ENCODE measurements at regions of chr11 and their contacts with region 1.

Region 1: DNA sequence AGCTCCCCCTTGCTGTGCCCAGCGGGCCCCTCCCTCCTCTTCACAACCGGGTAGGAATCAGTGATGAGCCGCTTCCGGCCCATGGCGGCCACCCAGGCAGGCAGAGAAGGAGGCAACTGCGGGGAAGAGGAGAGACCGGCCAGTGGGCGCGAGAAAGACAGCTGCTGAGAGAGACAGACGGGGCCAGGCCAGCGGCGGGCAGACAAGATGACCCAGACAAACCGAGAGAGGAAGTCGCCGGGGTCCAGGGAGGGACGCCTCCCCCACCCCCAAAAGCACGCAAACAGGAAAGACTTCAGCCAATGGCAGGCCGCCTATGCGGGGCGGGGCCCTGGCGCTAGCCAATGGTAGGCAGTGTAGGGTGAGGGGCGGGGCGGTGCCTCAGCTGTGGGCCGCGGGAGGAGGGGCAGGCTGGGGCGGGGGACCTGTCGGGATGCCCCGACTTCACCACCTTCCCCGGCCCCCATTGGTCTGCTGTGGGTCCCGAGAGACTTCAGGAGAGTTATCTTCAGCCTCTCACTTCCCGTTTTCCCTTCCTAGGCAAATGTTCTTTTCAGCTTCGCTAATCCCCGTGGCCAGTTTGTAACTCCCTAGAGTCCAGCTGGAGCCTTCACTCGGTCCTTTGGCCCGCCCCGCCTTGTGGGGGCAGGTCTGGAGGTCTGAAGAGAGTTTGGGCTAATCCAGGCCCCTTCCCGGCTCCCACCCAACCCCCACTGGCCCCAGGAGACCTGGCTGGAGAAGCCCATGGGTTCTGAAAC is at the start of gene POLD4:
- DNase-seq: peak; percentile 98
- ATAC-seq: peak; percentile 81
- H3K4me3 ChIP-seq: peak within 1 kb of the TSS; percentile 60 to 99 (median 83)
- H3K4me3 Mint-ChIP-seq: peak within 1 kb of the TSS; percentile 96
- H3K27ac ChIP-seq: peak within 1 kb of the TSS; percentile 94 to 96
- H3K27ac Mint-ChIP-seq: peak within 1 kb of the TSS; percentile 100
- H3K4me1 ChIP-seq: peaks cover 80 to 90% of the 10 kb centered on the region in 2 donors
- H3K4me1 Mint-ChIP-seq: peaks cover 87% of the 10 kb centered on the region
- H3K27me3 ChIP-seq: no peaks in the 10 kb centered on the region
- H3K27me3 Mint-ChIP-seq: no peaks in the 10 kb centered on the region
- CTCF ChIP-seq: no peak
- total RNA-seq, gene POLD4: 190 and 210 TPM in 2 replicates

Region 2: DNA sequence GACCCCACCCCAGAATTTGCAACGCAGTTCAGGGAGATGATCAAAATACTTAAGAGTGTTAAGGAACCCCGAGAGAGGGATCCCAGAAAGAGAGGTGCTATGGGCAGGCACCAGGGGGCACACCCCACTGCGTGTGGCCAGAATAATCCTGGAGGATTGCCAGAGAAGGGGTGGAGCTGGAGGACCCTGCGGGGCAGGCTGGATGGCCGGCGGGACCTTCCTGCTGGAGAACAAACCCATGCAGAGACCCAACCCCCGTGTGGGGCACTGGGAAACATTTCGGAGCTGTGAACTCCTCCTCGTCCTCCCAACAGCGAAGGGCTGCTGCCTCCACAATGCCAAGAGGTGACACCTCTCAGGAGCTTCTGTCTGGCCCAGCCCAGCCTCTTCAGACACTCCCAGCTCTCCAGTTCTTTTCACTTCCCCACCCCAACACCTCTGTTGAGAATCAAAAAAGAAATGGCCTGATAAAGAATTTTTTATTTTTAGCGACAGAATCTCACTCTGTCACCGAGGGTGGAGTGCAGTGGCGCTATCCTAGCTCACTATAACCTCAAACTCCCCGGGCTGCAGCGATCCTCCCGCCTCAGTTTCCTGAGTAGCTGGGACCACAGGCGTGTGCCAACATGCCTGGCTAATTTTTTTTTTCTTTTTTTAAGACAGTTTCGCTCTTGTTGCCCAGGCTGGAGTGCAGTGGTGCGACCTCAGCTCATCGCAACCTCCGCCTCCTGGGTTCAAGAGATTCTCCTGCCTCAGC is 271.3 kb before region 1 on chr11:
- CTCF ChIA-PET with region 1: interaction called, 10 read pairs
- POLR2A ChIA-PET with region 1: no interaction called
- intact Hi-C with region 1: no loop called
- DNase-seq: peak; percentile 43
- ATAC-seq: no peak
- H3K4me3 ChIP-seq: peak overlapping the region in 1 of 5 experiments; percentile 33
- H3K4me3 Mint-ChIP-seq: peak overlapping the region; percentile 54
- H3K27ac ChIP-seq: no peak overlapping the region
- H3K27ac Mint-ChIP-seq: no peak overlapping the region
- H3K4me1 ChIP-seq: peaks cover 11 to 12% of the 10 kb centered on the region in 2 donors
- H3K4me1 Mint-ChIP-seq: peaks cover 13% of the 10 kb centered on the region
- H3K27me3 ChIP-seq: peaks cover 0 to 8% (median 2%) of the 10 kb centered on the region in 4 experiments
- H3K27me3 Mint-ChIP-seq: peaks cover 9% of the 10 kb centered on the region
- CTCF ChIP-seq: no peak

Region 3: DNA sequence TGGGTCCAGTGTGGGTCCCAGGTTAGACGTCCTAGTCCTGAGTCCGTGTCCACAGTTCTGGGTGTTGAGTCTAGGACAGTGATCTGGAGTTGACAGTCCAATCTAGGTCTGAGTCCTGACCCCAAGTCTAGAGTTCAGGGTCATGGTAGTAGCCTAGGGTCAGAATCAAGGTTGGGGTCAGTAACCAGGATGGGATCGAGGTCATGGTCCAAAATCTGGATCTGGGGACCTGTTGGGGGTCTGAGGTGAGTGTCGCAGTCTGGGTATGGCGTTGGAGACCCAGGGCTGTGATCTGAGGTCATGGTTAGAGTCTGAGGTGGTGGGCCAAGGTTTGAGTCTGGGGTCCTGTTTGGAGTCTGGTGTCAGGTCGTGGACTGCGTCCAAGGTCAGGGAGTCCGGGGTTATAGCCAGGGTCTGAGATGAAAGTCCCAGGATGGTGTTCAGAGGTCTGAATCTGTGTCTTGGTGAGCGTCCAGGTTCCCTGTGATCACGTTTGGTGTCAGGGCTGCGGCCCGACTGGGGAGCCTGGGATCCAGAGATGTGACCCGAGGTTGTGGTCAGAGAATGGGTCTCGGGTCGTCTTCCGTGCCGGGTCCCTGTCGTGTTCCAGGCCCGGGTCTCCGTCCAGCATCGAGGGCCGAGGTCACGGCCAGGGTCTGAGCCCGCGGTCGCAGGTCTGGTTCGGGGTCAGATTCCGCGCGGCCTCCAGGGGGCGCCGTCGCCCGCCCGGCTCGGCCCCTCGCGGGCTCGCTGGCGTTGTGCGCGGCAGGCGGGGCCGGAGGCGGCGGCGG is 87.7 kb before region 1 on chr11:
- CTCF ChIA-PET with region 1: interaction called, 29 read pairs
- POLR2A ChIA-PET with region 1: interaction called, 26 read pairs
- intact Hi-C with region 1: no loop called
- DNase-seq: peak; percentile 89
- ATAC-seq: peak; percentile 69
- H3K4me3 ChIP-seq: no peak overlapping the region
- H3K4me3 Mint-ChIP-seq: peak overlapping the region; percentile 81
- H3K27ac ChIP-seq: peak overlapping the region; percentile 55 to 63
- H3K27ac Mint-ChIP-seq: peak overlapping the region; percentile 89
- H3K4me1 ChIP-seq: peaks cover 63 to 65% of the 10 kb centered on the region in 2 donors
- H3K4me1 Mint-ChIP-seq: peaks cover 66% of the 10 kb centered on the region
- H3K27me3 ChIP-seq: peaks cover 0 to 9% (median 2%) of the 10 kb centered on the region in 4 experiments
- H3K27me3 Mint-ChIP-seq: peaks cover 6% of the 10 kb centered on the region
- CTCF ChIP-seq: peak; percentile 69

Region 4: GRCh38 chr11:67277231-67277961 is 76.1 kb before region 1 on chr11:
- CTCF ChIA-PET with region 1: interaction called, 4 read pairs
- POLR2A ChIA-PET with region 1: interaction called, 12 read pairs
- intact Hi-C with region 1: no loop called
- DNase-seq: peak; percentile 96
- ATAC-seq: peak; percentile 95
- H3K4me3 ChIP-seq: peak overlapping the region; percentile 35 to 59 (median 50)
- H3K4me3 Mint-ChIP-seq: peak overlapping the region; percentile 84
- H3K27ac ChIP-seq: peak overlapping the region; percentile 82
- H3K27ac Mint-ChIP-seq: peak overlapping the region; percentile 95
- H3K4me1 ChIP-seq: peaks cover 82 to 86% of the 10 kb centered on the region in 2 donors
- H3K4me1 Mint-ChIP-seq: peaks cover 76% of the 10 kb centered on the region
- H3K27me3 ChIP-seq: no peaks in the 10 kb centered on the region
- H3K27me3 Mint-ChIP-seq: no peaks in the 10 kb centered on the region
- CTCF ChIP-seq: no peak

Region 5: DNA sequence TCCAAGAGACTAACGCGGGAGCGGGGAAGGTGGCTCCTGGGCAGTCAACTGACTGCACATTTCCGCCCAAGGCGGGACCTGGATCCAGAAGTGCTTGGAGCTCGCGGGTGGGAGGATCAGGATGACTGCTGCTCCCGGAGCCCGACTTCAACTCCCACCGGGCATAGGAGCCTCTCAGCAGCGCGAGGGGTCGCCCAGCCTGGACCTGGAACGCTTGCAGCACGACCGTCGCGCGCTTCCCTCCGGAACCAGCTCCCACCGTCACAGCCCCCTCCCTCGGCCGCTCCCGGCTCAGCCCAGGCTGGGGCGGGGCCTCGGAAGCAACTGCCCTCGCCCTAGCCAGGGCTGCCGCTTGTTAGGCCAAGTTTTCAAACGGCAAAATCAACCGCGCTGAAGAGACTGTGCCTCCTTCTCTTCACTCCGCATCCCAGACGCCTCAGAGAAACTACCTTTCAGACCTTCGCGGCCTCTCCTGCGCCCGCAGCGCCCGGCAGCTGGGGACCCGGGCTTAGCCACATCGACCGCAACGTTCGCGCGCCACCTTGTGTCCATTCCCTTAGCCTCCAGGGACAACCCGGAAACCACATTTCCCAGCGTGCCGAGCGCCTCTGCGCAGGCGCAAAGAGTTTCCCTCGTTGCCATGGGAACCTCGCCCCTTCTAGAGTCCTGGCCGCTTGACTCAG is 36.1 kb before region 1 on chr11:
- CTCF ChIA-PET with region 1: interaction called, 68 read pairs
- POLR2A ChIA-PET with region 1: interaction called, 13 read pairs
- intact Hi-C with region 1: loop called (anchors 1 kb)
- DNase-seq: peak; percentile 99
- ATAC-seq: peak; percentile 83
- H3K4me3 ChIP-seq: peak overlapping the region; percentile 77 to 92 (median 87)
- H3K4me3 Mint-ChIP-seq: peak overlapping the region; percentile 89
- H3K27ac ChIP-seq: peak overlapping the region; percentile 46 to 78
- H3K27ac Mint-ChIP-seq: peak overlapping the region; percentile 97
- H3K4me1 ChIP-seq: peaks cover 22 to 33% of the 10 kb centered on the region in 2 donors
- H3K4me1 Mint-ChIP-seq: peaks cover 21% of the 10 kb centered on the region
- H3K27me3 ChIP-seq: no peaks in the 10 kb centered on the region
- H3K27me3 Mint-ChIP-seq: no peaks in the 10 kb centered on the region
- CTCF ChIP-seq: peak; percentile 81

Region 6: GRCh38 chr11:67382276-67383136 is 29.0 kb after region 1 on chr11:
- CTCF ChIA-PET with region 1: interaction called, 2,379 read pairs
- POLR2A ChIA-PET with region 1: interaction called, 323 read pairs
- intact Hi-C with region 1: loop called (anchors 1 kb)
- DNase-seq: peak; percentile 88
- ATAC-seq: peak; percentile 86
- H3K4me3 ChIP-seq: no peak overlapping the region
- H3K4me3 Mint-ChIP-seq: peak overlapping the region; percentile 84
- H3K27ac ChIP-seq: peak overlapping the region in 1 of 2 donors; percentile 88
- H3K27ac Mint-ChIP-seq: peak overlapping the region; percentile 92
- H3K4me1 ChIP-seq: peaks cover 22 to 33% of the 10 kb centered on the region in 2 donors
- H3K4me1 Mint-ChIP-seq: peaks cover 22% of the 10 kb centered on the region
- H3K27me3 ChIP-seq: no peaks in the 10 kb centered on the region
- H3K27me3 Mint-ChIP-seq: no peaks in the 10 kb centered on the region
- CTCF ChIP-seq: peak; percentile 96

Region 7: GRCh38 chr11:67507864-67508485 is 154.5 kb after region 1 on chr11 and contains the start of gene CDK2AP2:
- CTCF ChIA-PET with region 1: interaction called, 6 read pairs
- POLR2A ChIA-PET with region 1: interaction called, 5 read pairs
- intact Hi-C with region 1: loop called (anchors 1 kb)
- DNase-seq: peak; percentile 100
- ATAC-seq: peak; percentile 74
- H3K4me3 ChIP-seq: peak within 1 kb of the TSS; percentile 57 to 88 (median 79)
- H3K4me3 Mint-ChIP-seq: peak within 1 kb of the TSS; percentile 92
- H3K27ac ChIP-seq: peak within 1 kb of the TSS; percentile 84 to 98
- H3K27ac Mint-ChIP-seq: peak within 1 kb of the TSS; percentile 95
- H3K4me1 ChIP-seq: peaks cover 39 to 46% of the 10 kb centered on the region in 2 donors
- H3K4me1 Mint-ChIP-seq: peaks cover 42% of the 10 kb centered on the region
- H3K27me3 ChIP-seq: peaks cover 0 to 16% (median 4%) of the 10 kb centered on the region in 4 experiments
- H3K27me3 Mint-ChIP-seq: peaks cover 8% of the 10 kb centered on the region
- CTCF ChIP-seq: no peak
- total RNA-seq, gene CDK2AP2: 50.3 and 62.7 TPM in 2 replicates